ENCODE measurements at regions of chr22 and their contacts with region 1.

Region 1: DNA sequence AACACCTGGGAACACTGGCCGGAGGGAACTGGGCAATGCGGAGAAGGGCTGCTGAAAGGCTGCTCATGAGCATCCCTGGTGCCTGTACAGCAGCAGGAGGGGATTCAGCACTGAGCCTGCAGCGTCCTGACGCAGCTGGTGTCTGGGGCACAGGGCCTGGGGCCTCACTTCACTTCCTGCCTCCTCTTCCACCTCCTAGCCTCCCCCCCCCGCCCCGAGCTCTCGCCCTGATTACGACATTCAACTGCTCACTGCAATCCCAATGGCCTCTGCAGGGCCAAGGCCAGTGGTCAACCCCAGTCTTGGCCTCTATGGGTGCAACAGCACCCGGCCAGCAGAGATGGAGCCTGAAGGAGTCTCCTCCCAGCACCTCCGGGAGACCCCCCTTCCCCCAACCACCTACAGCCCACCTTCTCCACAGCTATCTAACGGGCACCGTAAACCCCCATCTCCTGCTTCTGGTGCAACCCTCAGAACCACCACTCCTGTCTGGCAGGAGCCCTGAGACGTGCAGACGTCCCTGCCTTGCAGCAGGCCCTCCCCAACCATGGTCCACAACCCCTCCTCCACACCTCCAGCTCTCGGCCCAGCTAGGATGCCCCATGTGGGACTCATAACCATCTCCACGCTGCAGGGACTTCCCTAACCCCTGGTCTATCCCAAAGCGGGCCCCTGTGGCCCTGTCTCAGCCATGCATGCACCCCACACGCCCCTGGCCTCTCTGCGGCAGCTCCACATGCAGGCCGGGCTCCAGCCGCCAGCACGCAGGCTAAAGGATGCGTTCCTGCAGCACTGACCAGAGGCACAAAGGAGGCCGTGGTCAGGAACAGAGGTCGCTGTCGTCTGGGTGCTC is 38.2 kb downstream of the BRD1 start:
- DNase-seq: no peak
- H3K4me3 ChIP-seq: no peak overlapping the region
- H3K27ac ChIP-seq: peak overlapping the region; percentile 49 to 83 (median 79)
- H3K4me1 ChIP-seq: peaks cover 0 to 91% (median 88%) of the 10 kb centered on the region in 4 donors
- H3K27me3 ChIP-seq: no peaks in the 10 kb centered on the region
- CTCF ChIP-seq: no peak
- EP300 ChIP-seq: no peak
- POLR2A ChIP-seq: no peak

Region 2: DNA sequence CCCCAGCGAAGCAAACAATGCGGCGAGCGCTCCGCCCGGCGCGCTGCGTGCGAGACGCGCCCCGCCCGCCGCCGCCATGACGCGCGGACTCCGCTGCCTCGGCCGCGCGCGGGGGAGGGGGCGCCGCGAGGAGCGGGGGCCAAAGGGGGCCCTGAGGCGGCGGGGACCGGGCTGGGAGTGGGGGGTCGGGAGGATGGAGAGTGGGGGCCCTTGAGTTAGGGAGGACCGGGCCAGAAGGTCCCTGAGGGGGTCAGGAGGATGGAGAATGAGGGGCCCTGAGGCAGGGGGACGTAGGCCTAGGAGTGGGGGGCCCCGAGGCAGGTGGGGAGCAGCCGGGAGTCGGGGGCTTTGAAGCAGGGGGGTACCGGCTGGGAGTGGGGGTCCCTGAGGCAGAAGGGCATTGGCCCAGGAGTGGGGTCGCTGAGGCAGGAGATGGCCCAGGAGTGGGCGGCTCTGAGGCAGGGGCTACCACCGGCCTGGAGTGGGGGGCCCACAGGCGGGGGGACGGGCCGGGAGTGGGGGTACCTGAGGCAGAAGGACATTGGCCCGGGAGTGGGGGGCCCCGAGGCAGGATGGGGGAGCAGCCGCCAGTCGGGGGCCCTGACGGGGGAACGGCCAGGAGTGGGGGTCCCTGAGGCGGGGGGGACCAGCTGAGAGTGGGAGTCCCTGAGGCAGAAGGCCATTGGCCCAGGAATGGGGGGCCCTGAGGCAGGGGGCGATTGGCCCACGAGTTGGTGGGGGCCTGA is 38.5 kb after region 1 on chr22 and contains the start of gene BRD1:
- intact Hi-C with region 1: loop called (anchors 5 kb)
- DNase-seq: no peak
- H3K4me3 ChIP-seq: peak within 1 kb of the TSS; percentile 67 to 83 (median 74)
- H3K27ac ChIP-seq: peak within 1 kb of the TSS; percentile 86 to 98 (median 90)
- H3K4me1 ChIP-seq: peaks cover 0 to 42% (median 35%) of the 10 kb centered on the region in 4 donors
- H3K27me3 ChIP-seq: no peaks in the 10 kb centered on the region
- CTCF ChIP-seq: no peak
- EP300 ChIP-seq: no peak
- POLR2A ChIP-seq: no peak
- total RNA-seq, gene BRD1: 31.1 to 52.6 (median 35.9) TPM

Region 3: GRCh38 chr22:49917974-49918910 is 128.7 kb after region 1 on chr22 and contains the starts of genes ALG12 and CRELD2:
- intact Hi-C with region 1: loop called (anchors 10 kb)
- DNase-seq: peak; percentile 99
- H3K4me3 ChIP-seq: peak within 1 kb of the TSS; percentile 47 to 93 (median 84)
- H3K27ac ChIP-seq: peak within 1 kb of the TSS; percentile 93 to 97 (median 94)
- H3K4me1 ChIP-seq: peaks cover 0 to 28% (median 22%) of the 10 kb centered on the region in 4 donors
- H3K27me3 ChIP-seq: no peaks in the 10 kb centered on the region
- CTCF ChIP-seq: no peak
- EP300 ChIP-seq: no peak
- POLR2A ChIP-seq: no peak
- total RNA-seq, gene ALG12: 11.4 to 23.9 (median 15.4) TPM
- total RNA-seq, gene CRELD2: 15.5 to 26.5 (median 23.1) TPM

Region 4: DNA sequence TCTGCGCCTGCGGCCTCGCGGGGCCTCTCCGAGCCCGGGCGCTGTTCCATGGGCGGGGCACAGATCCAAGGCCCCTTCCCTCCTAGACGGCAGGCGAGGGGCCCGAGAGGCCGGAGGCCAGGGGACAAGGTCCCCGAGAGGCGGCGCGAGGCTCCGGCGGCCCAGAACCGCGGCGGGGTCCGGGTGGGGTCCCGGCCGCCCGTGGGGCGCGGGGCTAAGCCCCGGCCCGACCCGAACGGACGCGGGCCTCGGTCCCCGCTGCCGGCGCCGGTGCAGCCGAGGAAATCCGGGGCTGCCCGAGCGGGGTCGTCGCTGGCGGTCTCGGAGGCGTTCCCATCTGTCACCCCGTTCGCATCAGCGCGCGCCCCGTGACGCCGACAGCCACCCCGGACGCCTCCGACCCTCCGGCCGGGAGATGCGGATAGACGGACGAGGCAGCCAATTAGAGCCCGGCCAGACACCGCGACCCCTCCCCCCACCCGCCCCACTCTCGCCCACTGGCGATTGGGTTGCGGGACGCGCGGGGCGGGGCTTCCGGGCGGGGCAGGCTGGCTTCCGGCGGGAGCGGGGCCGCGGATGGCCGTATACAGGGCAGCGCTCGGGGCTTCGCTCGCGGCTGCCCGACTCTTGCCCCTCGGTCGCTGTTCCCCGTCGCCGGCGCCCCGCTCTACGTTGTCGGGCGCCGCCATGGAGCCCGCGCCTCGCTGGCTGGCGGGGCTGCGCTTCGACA is 411.1 kb after region 1 on chr22 and contains the start of gene SELENOO:
- intact Hi-C with region 1: loop called (anchors 10 kb)
- DNase-seq: peak; percentile 95
- H3K4me3 ChIP-seq: peak within 1 kb of the TSS; percentile 42 to 89 (median 84)
- H3K27ac ChIP-seq: peak within 1 kb of the TSS; percentile 79 to 89 (median 86)
- H3K4me1 ChIP-seq: peaks cover 0 to 32% (median 24%) of the 10 kb centered on the region in 4 donors
- H3K27me3 ChIP-seq: no peaks in the 10 kb centered on the region
- CTCF ChIP-seq: no peak
- EP300 ChIP-seq: no peak
- POLR2A ChIP-seq: peak; percentile 24 to 52
- total RNA-seq, gene SELENOO: 17.5 to 30.2 (median 22.3) TPM